Activated naive CD4-positive, alpha-beta T cell treated with anti-CD3 and anti-CD28 coated beads for 36 hours (primary cell): ENCODE measurements at regions of chr19 and their contacts with region 1.

Region 1: DNA sequence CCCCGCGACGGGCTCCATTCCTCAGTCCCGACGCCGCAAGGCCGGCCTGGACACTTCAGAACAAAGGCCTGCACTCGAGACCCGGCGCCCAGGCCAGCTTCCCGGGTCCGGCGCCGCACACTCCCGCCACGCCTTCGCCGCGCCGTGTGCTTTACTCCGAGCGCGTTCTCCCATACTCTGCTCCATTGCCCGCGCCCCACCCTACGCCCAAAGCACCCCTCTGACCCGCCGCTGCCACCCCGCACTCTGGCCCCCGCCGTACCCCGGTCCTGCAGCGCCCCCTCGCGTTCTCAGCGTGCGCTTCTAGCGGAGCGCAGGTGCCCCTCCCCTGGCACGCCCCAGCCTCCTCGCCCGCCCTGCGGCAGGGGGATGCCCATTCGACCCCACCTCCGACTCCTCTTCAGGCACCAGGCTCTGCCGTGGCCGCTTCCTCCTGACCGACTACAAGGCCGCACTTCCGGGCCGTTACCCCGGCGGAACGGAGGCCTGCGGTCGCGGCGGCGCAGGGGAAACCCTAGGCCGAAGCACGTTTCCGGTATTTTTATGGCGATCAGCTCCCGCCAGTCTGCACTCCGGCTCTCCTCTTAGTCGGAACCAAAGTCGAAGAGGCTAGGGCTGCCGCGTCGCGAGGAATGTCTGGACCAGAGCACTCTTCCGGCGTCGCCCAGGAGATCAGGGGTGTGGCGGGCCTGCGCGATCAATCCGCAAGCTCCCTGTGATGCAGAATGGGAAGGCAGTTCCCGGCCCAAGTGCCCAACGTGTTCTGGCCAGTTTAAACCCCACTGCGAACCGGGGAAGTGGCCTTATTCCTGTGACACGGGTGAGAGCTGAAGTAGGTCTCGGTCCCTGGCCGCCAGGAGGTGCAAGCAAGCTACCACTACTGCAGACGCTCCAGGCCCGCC is at the start of gene ZBTB45:
- DNase-seq: peak; percentile 94
- H3K4me3 Mint-ChIP-seq: peak within 1 kb of the TSS; percentile 93
- H3K27ac Mint-ChIP-seq: peak within 1 kb of the TSS; percentile 98
- H3K4me1 Mint-ChIP-seq: peaks cover 38% of the 10 kb centered on the region
- H3K27me3 Mint-ChIP-seq: no peaks in the 10 kb centered on the region
- total RNA-seq, gene ZBTB45: 5.5 to 6.0 TPM

Region 2: DNA sequence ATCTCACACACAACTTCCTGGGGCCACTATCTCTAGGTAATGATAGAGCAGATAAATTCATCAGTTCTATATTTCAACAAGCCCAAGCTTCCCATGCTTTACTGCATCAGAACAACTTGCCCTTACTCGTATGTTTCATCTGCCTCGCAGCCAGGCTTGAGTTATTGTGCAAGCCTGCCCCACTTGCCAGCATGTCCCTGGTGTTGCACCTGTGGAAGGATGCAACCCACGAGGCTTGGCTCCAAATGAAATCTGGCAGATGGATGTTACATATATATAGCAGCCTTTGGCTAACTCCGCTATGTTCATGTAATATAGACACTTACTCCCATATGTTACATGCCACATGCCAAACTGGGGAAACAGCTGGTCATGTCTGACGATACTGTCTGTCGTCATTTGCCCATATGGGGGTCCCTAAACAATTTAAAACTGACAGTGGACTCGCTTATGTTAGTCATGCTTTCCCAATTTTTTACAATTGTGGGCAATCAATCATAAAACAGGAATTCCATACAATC is 208.2 kb before region 1 on chr19:
- CTCF ChIA-PET with region 1: no interaction called
- intact Hi-C with region 1: no loop called
- DNase-seq: no peak
- H3K4me3 Mint-ChIP-seq: no peak overlapping the region
- H3K27ac Mint-ChIP-seq: no peak overlapping the region
- H3K4me1 Mint-ChIP-seq: peaks cover 24% of the 10 kb centered on the region
- H3K27me3 Mint-ChIP-seq: no peaks in the 10 kb centered on the region

Region 3: DNA sequence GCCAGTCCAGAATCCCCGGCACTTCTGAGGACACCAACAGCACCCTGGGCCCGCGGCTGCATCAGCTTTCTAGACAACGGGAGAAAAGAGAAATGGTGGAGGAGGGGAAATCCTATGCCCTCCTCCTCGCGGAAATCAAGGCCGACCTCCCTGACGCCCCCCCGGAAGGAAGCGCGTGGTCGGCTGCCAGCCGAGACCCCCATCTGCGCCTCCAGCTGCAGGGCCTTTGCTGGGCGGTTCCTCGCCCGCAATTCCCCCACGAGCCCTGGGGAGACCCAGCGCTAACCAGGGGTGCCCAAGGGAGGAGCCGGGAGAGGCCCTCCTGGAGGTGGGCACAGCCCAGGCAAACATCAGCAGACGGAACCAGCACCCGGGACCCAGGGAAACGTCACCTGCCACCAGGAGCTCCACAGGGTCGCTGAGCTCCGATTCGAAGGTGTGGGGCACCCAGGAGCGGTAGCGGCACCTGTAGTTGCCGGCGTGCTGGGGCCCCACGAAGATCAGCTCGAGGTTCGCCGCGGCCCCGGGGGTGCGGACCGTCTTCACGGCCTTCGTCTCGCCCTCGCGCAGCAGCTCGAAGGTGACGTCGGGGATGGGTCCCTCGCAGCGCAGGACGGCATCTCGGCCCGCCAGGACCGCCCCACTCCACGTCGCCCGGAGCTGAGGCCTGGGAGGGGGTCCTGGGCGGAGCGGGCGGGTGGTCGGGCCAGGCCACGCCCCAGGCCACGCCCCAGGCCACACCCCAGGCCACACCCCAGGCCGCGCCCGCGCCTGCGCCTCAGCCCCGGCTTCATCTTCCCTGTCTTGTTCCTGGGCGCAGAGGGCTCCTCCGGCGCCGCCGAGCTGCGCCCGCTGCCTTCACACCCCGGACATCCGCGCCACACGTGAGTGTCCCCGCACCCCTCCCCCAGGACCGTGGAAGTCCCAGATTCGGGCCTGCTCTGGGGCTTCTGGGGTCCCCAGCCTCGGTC is 172.4 kb before region 1 on chr19:
- CTCF ChIA-PET with region 1: no interaction called
- intact Hi-C with region 1: no loop called
- DNase-seq: peak; percentile 69
- H3K4me3 Mint-ChIP-seq: peak overlapping the region; percentile 87
- H3K27ac Mint-ChIP-seq: peak overlapping the region; percentile 21
- H3K4me1 Mint-ChIP-seq: peaks cover 23% of the 10 kb centered on the region
- H3K27me3 Mint-ChIP-seq: peaks cover 5% of the 10 kb centered on the region

Region 4: GRCh38 chr19:58466760-58467589 is 52.6 kb before region 1 on chr19 and contains the start of gene ZNF324:
- CTCF ChIA-PET with region 1: interaction called, 3 read pairs
- intact Hi-C with region 1: loop called (anchors 1 kb)
- DNase-seq: peak; percentile 99
- H3K4me3 Mint-ChIP-seq: peak within 1 kb of the TSS; percentile 83
- H3K27ac Mint-ChIP-seq: no peak within 1 kb of the TSS
- H3K4me1 Mint-ChIP-seq: peaks cover 20% of the 10 kb centered on the region
- H3K27me3 Mint-ChIP-seq: peaks cover 2% of the 10 kb centered on the region
- total RNA-seq, gene ZNF324: 2.4 to 3.0 TPM

Region 5: GRCh38 chr19:58543826-58544590 is 24.4 kb after region 1 on chr19 and contains the start of gene TRIM28:
- CTCF ChIA-PET with region 1: interaction called, 34 read pairs
- intact Hi-C with region 1: loop called (anchors 1 kb)
- DNase-seq: peak; percentile 100
- H3K4me3 Mint-ChIP-seq: peak within 1 kb of the TSS; percentile 97
- H3K27ac Mint-ChIP-seq: peak within 1 kb of the TSS; percentile 97
- H3K4me1 Mint-ChIP-seq: peaks cover 30% of the 10 kb centered on the region
- H3K27me3 Mint-ChIP-seq: peaks cover 15% of the 10 kb centered on the region
- total RNA-seq, gene TRIM28: 475 to 483 TPM

Region 6: GRCh38 chr19:58572818-58573657 is 53.4 kb after region 1 on chr19 and contains the start of gene MZF1:
- CTCF ChIA-PET with region 1: interaction called, 10 read pairs
- intact Hi-C with region 1: loop called (anchors 1 kb)
- DNase-seq: peak; percentile 100
- H3K4me3 Mint-ChIP-seq: peak within 1 kb of the TSS; percentile 96
- H3K27ac Mint-ChIP-seq: peak within 1 kb of the TSS; percentile 99
- H3K4me1 Mint-ChIP-seq: peaks cover 39% of the 10 kb centered on the region
- H3K27me3 Mint-ChIP-seq: no peaks in the 10 kb centered on the region
- total RNA-seq, gene MZF1: 13.3 to 13.4 TPM